Caco-2 (cell line): ENCODE measurements at regions of chr1 and their contacts with region 1.

Region 1: DNA sequence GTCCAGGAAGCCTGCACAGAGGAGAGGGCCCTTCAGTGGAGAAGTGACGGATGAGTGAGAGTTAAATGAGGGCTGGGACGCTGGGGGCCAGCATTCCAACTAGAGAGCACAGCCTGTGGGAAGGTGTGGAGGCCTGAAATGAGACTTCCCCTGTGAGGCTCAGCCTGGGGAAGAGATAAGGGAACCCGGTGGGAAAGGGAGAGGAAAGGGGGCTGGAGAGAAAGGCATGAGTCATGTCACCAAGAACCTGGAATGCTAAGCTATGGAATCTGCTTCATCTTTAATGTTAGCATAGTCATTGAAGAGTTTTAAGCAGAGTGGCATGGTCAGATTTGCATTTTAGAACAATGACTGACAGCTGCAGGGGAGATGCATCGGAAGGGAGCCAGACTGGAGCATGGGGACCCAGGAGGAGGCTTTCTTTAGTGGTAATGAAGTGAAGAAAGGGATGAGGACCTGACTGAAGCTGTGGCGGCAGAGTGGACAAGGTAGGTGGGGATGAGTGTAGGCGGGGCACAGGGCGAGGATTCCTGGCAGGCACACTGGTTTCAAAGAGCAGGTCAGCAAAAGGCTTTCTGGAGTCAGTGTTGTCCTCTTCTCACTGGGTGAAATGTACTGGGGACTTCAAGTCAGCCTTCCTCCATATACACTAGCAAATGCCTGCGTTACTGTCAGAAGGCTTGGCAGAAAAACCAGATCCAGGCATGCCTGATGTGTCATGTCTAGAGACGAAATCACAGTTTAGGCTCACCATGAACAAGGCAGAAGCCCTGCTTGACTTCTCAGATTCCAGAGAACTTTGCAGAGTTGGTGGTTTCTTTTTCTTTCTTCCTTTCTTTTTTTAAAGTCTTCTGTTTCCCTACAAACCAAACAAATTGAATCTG is 8.0 kb downstream of the RGL1 start:
- DNase-seq: peak; percentile 68 to 84
- H3K4me3 ChIP-seq: peak overlapping the region; percentile 4
- H3K4me3 Mint-ChIP-seq: peak overlapping the region; percentile 76
- H3K27ac Mint-ChIP-seq: peak overlapping the region; percentile 84
- H3K4me1 ChIP-seq: peaks cover 67% of the 10 kb centered on the region
- H3K4me1 Mint-ChIP-seq: peaks cover 49% of the 10 kb centered on the region
- H3K27me3 ChIP-seq: no peaks in the 10 kb centered on the region
- H3K27me3 Mint-ChIP-seq: no peaks in the 10 kb centered on the region
- CTCF ChIP-seq: no peak

Region 2: GRCh38 chr1:183635606-183636333 is 177.2 kb before region 1 on chr1 and contains the start of gene ARPC5:
- CTCF ChIA-PET with region 1: no interaction called
- POLR2A ChIA-PET with region 1: no interaction called
- intact Hi-C with region 1: loop called (anchors 5 kb)
- DNase-seq: peak; percentile 96 to 97
- H3K4me3 ChIP-seq: peak within 1 kb of the TSS; percentile 78
- H3K4me3 Mint-ChIP-seq: peak within 1 kb of the TSS; percentile 91
- H3K27ac Mint-ChIP-seq: peak within 1 kb of the TSS; percentile 90
- H3K4me1 ChIP-seq: peaks cover 41% of the 10 kb centered on the region
- H3K4me1 Mint-ChIP-seq: peaks cover 16% of the 10 kb centered on the region
- H3K27me3 ChIP-seq: no peaks in the 10 kb centered on the region
- H3K27me3 Mint-ChIP-seq: no peaks in the 10 kb centered on the region
- CTCF ChIP-seq: no peak
- total RNA-seq, gene ARPC5: 123 and 135 TPM in 2 replicates